ENCODE measurements at regions of chr1 and their contacts with region 1.

Region 1: GRCh38 chr1:151281969-151282882 is at the start of gene ZNF687:
- DNase-seq: peak; percentile 99

Region 2: DNA sequence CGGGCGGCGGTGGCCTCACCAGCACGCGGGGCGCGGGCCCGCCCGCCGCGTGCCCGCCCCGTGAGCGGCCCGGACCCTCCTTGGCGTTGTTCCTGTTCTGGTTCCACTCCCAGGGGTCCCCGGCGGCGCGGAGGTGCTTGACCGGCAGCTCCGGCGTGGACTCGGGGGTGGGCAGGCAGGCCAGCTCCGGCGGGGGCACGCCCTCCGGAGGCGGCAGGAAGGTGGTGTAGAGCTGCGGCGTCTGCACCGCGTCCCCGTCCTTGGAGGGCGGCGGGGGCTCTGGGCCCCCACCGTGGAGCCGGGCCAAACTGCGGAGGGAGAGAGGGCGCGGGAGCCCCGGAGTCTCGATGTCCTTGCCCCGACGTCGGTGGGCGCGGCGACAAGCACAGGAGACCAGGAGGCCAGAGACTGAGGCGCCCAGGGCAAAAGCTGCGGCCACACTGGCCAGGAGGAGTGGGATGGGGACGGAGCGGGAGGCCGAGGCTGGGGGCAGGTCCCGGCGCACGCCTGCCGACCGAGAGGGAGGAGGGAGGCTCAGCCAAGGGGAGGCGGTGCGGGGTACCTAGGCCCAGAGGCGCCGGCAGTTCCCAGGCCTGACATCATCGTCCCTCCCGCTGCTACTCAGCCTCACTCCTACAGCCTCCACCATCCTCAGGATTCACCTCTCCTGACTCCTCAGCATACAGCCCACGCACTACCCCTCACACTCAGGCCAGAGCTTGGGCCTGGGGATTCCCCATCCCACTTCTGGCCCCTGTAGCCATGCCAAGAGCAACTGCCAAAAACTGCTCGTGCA is 149.0 kb before region 1 on chr1:
- CTCF ChIA-PET with region 1: no interaction called
- POLR2A ChIA-PET with region 1: no interaction called
- DNase-seq: no peak

Region 3: DNA sequence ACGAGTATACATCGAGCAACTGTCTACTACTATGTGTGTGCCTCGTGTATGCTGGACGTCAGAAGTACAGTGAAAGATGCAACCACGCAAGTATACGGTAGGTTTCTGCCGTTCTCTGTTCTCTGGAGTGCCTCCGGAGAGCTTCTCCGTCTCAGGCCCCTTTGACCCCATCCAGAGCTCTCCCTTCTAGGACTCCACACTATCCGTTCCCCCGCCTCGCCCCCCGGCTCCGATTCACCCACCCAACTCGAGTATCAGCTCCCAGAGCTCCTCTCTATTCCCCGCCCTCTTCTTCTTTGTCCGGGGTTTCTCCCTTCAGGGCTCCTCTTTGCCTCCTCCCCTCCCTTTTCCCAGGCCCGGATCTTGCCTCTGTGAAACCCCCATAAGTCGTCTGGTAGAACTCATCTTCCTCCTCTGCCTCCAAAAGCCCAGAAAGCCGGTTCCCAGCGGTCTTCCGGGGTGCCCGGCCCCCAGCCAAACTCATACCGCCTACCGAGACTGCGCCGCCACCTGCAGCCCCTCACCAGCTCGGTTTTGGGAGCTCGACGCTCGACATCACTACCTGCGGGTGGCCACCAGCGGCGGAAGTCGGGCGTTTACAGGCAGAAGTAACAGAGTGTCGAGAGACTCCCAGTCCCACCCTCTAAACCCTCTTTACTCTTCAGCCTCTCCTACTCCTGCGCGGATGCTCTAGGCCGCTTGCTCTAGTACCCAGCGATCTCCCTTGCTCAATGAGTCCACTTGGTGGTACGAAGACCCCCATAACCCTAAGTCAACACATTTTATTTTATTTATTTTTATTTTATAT is 92.4 kb before region 1 on chr1 and contains the start of gene VPS72:
- CTCF ChIA-PET with region 1: no interaction called
- POLR2A ChIA-PET with region 1: interaction called, 17 read pairs
- DNase-seq: peak; percentile 93

Region 4: GRCh38 chr1:151198255-151199127 is 83.7 kb before region 1 on chr1 and contains the start of gene PIP5K1A:
- CTCF ChIA-PET with region 1: no interaction called
- POLR2A ChIA-PET with region 1: interaction called, 12 read pairs
- DNase-seq: peak; percentile 98

Region 5: GRCh38 chr1:151254217-151255213 is 27.7 kb before region 1 on chr1 and contains the start of gene PSMD4:
- CTCF ChIA-PET with region 1: interaction called, 3 read pairs
- POLR2A ChIA-PET with region 1: interaction called, 27 read pairs
- DNase-seq: peak; percentile 99

Region 6: DNA sequence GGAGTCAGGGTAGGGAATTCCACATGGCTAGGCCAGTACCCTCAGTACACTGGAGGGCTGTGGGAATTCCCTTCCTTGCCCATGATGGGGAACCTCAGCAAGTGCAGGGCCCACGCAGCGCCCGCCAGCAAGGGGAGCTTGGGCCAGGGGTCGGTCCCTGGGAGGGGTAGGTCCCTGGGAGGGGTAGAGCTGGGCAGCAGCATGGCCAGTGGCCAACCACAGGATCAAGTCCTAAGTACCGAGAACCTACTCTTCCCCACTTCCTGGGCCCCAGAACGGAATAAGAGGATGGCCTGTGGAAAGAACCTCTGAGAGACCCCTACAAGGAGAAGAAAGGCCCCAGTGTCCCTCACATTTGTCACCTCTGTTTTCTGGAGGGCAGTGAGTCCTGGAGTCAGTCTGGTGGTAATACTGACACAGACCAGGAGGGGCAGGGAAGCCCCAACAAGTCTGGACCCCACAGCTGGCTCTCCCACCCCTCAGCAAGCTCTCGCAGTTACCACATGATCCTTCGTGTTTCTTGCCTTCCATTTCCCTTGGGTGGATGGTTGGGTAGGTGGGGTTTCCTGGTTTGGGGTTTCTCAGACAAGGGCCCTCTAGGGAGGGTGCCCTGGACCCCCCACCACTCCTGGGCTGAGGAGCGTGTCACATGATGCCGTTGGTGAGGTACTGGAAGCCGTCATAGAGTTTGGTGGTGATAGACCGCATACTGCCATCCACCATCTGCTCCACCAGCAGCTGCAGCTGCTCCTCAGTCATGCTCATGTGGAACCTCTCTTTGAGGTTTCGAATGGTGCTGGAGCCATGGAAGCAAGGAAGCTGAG is 10.2 kb after region 1 on chr1:
- CTCF ChIA-PET with region 1: no interaction called
- POLR2A ChIA-PET with region 1: interaction called, 20 read pairs
- DNase-seq: no peak

Region 7: GRCh38 chr1:151311589-151312331 is 29.5 kb after region 1 on chr1:
- CTCF ChIA-PET with region 1: no interaction called
- POLR2A ChIA-PET with region 1: interaction called, 25 read pairs
- DNase-seq: peak; percentile 48

Region 8: DNA sequence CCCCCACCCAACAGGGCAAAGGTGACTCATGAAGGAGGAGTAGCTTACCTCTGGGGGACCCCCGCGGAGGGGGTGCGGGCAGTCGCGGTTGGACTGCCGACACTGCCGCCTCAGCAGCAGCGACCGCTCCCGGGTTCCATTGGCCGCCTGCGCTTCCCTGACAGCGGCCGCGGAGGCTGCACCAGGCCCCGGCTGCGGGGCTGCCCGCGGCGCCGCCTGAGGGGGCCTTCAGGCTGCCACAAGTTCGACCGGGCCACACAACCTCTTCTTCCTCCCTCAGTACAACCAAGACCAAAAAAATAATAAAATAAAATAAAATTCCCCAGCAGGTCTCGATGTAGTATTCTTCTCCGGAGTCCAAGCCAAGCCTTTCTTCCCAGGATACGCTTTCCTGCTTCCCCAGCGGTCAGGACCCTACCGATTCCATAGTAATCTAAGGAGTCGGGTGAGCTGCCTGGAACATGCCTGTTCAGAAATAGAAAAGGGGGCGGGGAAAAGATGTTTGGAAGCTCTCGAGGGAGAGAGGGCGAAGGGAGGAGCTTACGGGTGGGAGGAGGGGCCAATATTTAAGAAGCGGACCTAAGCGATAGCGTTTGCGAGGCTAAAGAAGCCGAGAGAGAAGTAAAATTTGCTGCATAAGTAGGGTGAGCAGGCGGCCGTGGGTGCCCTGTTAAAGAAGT is 45.1 kb after region 1 on chr1 and contains the start of gene PI4KB:
- CTCF ChIA-PET with region 1: no interaction called
- POLR2A ChIA-PET with region 1: interaction called, 25 read pairs
- DNase-seq: peak; percentile 96